Lower leg skin (tissue), 4 donors: ENCODE measurements at regions of chr3 and their contacts with region 1.

Region 1: GRCh38 chr3:134406331-134407238 is 32.3 kb upstream of the AMOTL2 start:
- DNase-seq: peak in 1 of 2 donors; percentile 14
- H3K4me3 ChIP-seq: no peak overlapping the region
- CTCF ChIP-seq: no peak
- POLR2A ChIP-seq: no peak

Region 2: GRCh38 chr3:134326760-134327593 is 79.6 kb before region 1 on chr3:
- intact Hi-C with region 1: no loop called
- DNase-seq: peak; percentile 72 to 92
- H3K4me3 ChIP-seq: no peak overlapping the region
- CTCF ChIP-seq: no peak
- POLR2A ChIP-seq: no peak

Region 3: GRCh38 chr3:134453631-134454030 is 47.0 kb after region 1 on chr3:
- intact Hi-C with region 1: loop called (anchors 10 kb)
- DNase-seq: no peak
- H3K4me3 ChIP-seq: no peak overlapping the region
- CTCF ChIP-seq: no peak
- POLR2A ChIP-seq: no peak